K562 (cell line): ENCODE measurements at regions of chr14 and their contacts with region 1.

Region 1: DNA sequence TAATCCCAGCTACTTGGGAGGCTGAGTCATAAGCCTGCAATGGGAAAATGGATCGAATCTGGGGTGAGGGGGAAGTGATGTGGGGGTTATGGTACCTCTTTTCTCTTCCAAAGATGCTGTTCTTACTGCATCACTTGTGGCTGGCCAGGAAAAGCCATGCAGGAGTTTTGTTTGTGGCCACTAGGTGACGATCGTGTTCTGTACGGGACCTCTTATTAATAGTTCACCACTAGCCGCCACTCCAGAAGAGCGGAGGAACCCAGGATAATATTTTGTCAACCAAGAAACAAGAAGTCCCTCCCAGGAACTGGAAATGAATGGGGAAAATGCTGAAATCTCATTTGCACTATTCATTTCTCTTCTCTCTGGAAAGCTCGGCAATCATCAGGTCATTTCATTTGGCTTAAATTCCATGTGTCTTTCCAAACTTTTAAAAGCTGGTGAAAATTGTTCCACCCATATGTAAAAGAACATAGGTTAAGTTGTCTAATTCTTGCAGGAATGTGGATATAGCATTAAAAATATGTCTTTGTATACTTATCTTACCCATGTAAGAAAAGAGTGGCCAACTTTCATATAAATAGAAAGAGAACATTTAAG is 8.9 kb downstream of the GPR65 start:
- DNase-seq: peak; percentile 60 to 73 (median 62)
- ATAC-seq: peak; percentile 97
- H3K4me3 ChIP-seq: no peak overlapping the region
- H3K27ac ChIP-seq: no peak overlapping the region
- H3K4me1 ChIP-seq: no peaks in the 10 kb centered on the region
- H3K27me3 ChIP-seq: no peaks in the 10 kb centered on the region
- CTCF ChIP-seq: peak; percentile 77 to 91 (median 82)
- EP300 ChIP-seq: no peak
- POLR2A ChIP-seq: no peak
- RAD21 ChIP-seq: peak; percentile 89 to 91

Region 2: GRCh38 chr14:87944987-87945604 is 68.8 kb before region 1 on chr14:
- CTCF ChIA-PET with region 1: no interaction called
- POLR2A ChIA-PET with region 1: no interaction called
- in situ Hi-C with region 1: no loop called
- intact Hi-C with region 1: loop called (anchors 1 kb)
- DNase-seq: peak; percentile 12 to 55 (median 17)
- ATAC-seq: no peak
- H3K4me3 ChIP-seq: no peak overlapping the region
- H3K27ac ChIP-seq: no peak overlapping the region
- H3K4me1 ChIP-seq: no peaks in the 10 kb centered on the region
- H3K27me3 ChIP-seq: no peaks in the 10 kb centered on the region
- CTCF ChIP-seq: peak; percentile 26 to 66 (median 41); a peak in 3 of 6 replicates
- EP300 ChIP-seq: no peak
- POLR2A ChIP-seq: no peak
- RAD21 ChIP-seq: peak; percentile 70 to 72

Region 3: GRCh38 chr14:87999277-87999676 is 14.6 kb before region 1 on chr14:
- CTCF ChIA-PET with region 1: no interaction called
- POLR2A ChIA-PET with region 1: no interaction called
- in situ Hi-C with region 1: no loop called
- intact Hi-C with region 1: no loop called
- DNase-seq: no peak
- ATAC-seq: no peak
- H3K4me3 ChIP-seq: no peak overlapping the region
- H3K27ac ChIP-seq: no peak overlapping the region
- H3K4me1 ChIP-seq: peaks cover 3 to 34% of the 10 kb centered on the region in 2 experiments; a peak in 4 of 5 replicates
- H3K27me3 ChIP-seq: no peaks in the 10 kb centered on the region
- CTCF ChIP-seq: no peak
- EP300 ChIP-seq: no peak
- POLR2A ChIP-seq: no peak
- RAD21 ChIP-seq: no peak

Region 4: GRCh38 chr14:88143810-88144209 is 130.0 kb after region 1 on chr14:
- CTCF ChIA-PET with region 1: no interaction called
- POLR2A ChIA-PET with region 1: interaction called, 3 read pairs
- in situ Hi-C with region 1: no loop called
- intact Hi-C with region 1: loop called (anchors 5 kb)
- DNase-seq: peak in 2 of 4 experiments; percentile 2 to 7
- ATAC-seq: no peak
- H3K4me3 ChIP-seq: no peak overlapping the region
- H3K27ac ChIP-seq: no peak overlapping the region
- H3K4me1 ChIP-seq: no peaks in the 10 kb centered on the region
- H3K27me3 ChIP-seq: no peaks in the 10 kb centered on the region
- CTCF ChIP-seq: peak in 2 of 3 experiments; percentile 9 to 29; a peak in 3 of 6 replicates
- EP300 ChIP-seq: no peak
- POLR2A ChIP-seq: no peak
- RAD21 ChIP-seq: peak; percentile 27 to 43; a peak in 3 of 4 replicates

Region 5: GRCh38 chr14:88168498-88169165 is 154.8 kb after region 1 on chr14:
- CTCF ChIA-PET with region 1: no interaction called
- POLR2A ChIA-PET with region 1: no interaction called
- in situ Hi-C with region 1: loop called (anchors 10 kb)
- intact Hi-C with region 1: loop called (anchors 1 kb)
- DNase-seq: peak; percentile 36 to 46 (median 40)
- ATAC-seq: peak; percentile 90
- H3K4me3 ChIP-seq: no peak overlapping the region
- H3K27ac ChIP-seq: no peak overlapping the region
- H3K4me1 ChIP-seq: no peaks in the 10 kb centered on the region
- H3K27me3 ChIP-seq: no peaks in the 10 kb centered on the region
- CTCF ChIP-seq: peak; percentile 57 to 67 (median 60)
- EP300 ChIP-seq: no peak
- POLR2A ChIP-seq: no peak
- RAD21 ChIP-seq: peak in 1 of 2 experiments; percentile 56; a peak in 3 of 4 replicates

Region 6: DNA sequence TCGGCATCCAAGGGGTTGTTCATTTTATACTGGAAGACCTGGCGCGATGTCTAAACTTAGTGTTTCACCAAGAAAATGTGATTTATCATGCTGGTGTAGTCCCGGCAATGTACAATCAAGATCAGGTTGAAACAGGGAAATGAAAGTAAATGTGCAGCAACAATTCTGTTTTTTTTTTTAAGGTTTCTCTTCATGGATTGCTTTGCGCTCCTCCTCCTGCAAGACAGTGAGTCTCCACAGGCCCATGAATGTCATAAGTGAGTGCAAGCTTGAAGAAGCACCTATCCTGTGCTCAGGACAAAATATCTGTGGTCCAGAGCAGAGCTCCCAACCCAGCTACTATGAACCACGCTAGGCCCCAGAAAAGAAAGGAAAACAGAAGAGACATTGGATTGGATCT is 165.9 kb after region 1 on chr14:
- CTCF ChIA-PET with region 1: no interaction called
- POLR2A ChIA-PET with region 1: no interaction called
- in situ Hi-C with region 1: loop called (anchors 10 kb)
- intact Hi-C with region 1: no loop called
- DNase-seq: no peak
- ATAC-seq: no peak
- H3K4me3 ChIP-seq: no peak overlapping the region
- H3K27ac ChIP-seq: no peak overlapping the region
- H3K4me1 ChIP-seq: no peaks in the 10 kb centered on the region
- H3K27me3 ChIP-seq: no peaks in the 10 kb centered on the region; a peak in 1 of 5 replicates
- CTCF ChIP-seq: no peak
- EP300 ChIP-seq: no peak
- POLR2A ChIP-seq: no peak
- RAD21 ChIP-seq: no peak

Region 7: GRCh38 chr14:88189417-88190191 is 175.8 kb after region 1 on chr14:
- CTCF ChIA-PET with region 1: no interaction called
- POLR2A ChIA-PET with region 1: no interaction called
- in situ Hi-C with region 1: no loop called
- intact Hi-C with region 1: loop called (anchors 5 kb)
- DNase-seq: peak; percentile 26 to 80 (median 43)
- ATAC-seq: peak; percentile 96
- H3K4me3 ChIP-seq: no peak overlapping the region
- H3K27ac ChIP-seq: no peak overlapping the region
- H3K4me1 ChIP-seq: no peaks in the 10 kb centered on the region
- H3K27me3 ChIP-seq: peaks cover 5 to 24% of the 10 kb centered on the region in 2 experiments; a peak in 3 of 5 replicates
- CTCF ChIP-seq: peak; percentile 54 to 75 (median 59); a peak in 5 of 6 replicates
- EP300 ChIP-seq: no peak
- POLR2A ChIP-seq: no peak
- RAD21 ChIP-seq: peak; percentile 42 to 74

Region 8: DNA sequence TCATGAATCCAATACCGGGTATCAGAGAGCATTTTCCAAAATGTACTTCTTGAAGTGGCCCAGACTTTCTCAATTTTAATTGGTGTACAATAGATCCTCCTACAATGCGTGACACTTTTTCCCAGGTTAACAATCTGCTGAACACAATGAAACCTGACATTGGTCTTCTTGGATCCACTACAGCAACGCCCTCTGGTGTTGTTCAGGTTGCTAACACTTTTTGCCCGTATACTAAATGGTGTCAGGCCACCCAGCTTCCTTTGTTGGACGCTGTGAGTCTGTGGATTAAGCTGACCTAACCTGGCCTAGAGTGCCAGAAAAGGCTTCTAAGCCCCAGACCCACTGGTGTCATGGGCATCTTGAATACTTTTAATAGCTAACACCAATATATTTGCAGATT is 220.1 kb after region 1 on chr14:
- CTCF ChIA-PET with region 1: no interaction called
- POLR2A ChIA-PET with region 1: no interaction called
- in situ Hi-C with region 1: no loop called
- intact Hi-C with region 1: loop called (anchors 2 kb)
- DNase-seq: peak; percentile 6 to 32 (median 12)
- ATAC-seq: peak; percentile 69
- H3K4me3 ChIP-seq: no peak overlapping the region
- H3K27ac ChIP-seq: no peak overlapping the region
- H3K4me1 ChIP-seq: no peaks in the 10 kb centered on the region
- H3K27me3 ChIP-seq: no peaks in the 10 kb centered on the region
- CTCF ChIP-seq: peak; percentile 43 to 53 (median 48); a peak in 4 of 6 replicates
- EP300 ChIP-seq: no peak
- POLR2A ChIP-seq: no peak
- RAD21 ChIP-seq: peak; percentile 39 to 46